ENCODE measurements at regions of chr12 and their contacts with region 1.

Region 1: GRCh38 chr12:101578417-101578816 is 16.4 kb upstream of the MYBPC1 start:
- DNase-seq: no peak
- H3K4me3 ChIP-seq: no peak overlapping the region
- H3K27ac ChIP-seq: no peak overlapping the region
- H3K4me1 ChIP-seq: no peaks in the 10 kb centered on the region
- H3K27me3 ChIP-seq: no peaks in the 10 kb centered on the region
- CTCF ChIP-seq: no peak
- POLR2A ChIP-seq: no peak

Region 2: DNA sequence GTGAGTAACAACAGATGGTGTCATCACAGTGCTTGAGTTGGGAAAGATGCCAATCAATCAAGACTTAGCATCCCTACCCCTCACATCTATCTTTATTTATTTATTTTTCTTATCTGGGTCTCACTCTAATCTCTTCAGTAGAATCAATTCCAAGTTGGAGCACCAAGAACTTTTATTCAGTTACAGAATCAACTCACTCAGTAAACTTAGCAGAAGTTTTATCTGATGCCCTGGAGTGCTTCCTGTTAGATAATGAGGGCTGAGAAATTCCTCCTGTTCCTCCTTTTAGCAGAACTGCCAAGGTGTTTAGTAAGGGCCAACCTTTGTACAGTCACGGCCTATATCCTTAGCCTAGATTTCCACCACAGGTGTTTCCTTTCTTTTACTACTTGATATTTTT is 357.1 kb before region 1 on chr12:
- intact Hi-C with region 1: loop called (anchors 5 kb)
- DNase-seq: no peak
- H3K4me3 ChIP-seq: no peak overlapping the region
- H3K27ac ChIP-seq: no peak overlapping the region
- H3K4me1 ChIP-seq: no peaks in the 10 kb centered on the region
- H3K27me3 ChIP-seq: no peaks in the 10 kb centered on the region
- CTCF ChIP-seq: no peak
- POLR2A ChIP-seq: no peak

Region 3: DNA sequence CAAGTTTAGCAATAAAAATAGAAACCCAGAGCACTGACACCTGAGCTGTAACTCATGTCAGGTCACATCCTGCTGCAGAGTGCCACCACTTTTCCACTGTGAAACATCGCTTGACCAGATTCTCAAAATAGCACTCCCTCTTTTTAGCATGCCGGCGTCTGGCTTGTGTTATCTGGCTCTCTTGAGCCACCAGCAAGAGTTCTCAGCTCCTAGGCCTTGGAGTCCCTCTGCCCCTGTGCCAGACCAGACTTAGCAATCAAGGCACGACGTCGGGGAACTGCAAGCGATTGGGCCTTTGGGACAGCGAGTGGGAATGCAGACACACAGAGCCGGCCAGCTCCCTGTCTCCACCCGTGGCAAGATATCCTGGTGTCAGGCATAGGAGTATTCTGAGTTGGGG is 50.7 kb before region 1 on chr12:
- intact Hi-C with region 1: no loop called
- DNase-seq: no peak
- H3K4me3 ChIP-seq: no peak overlapping the region
- H3K27ac ChIP-seq: no peak overlapping the region
- H3K4me1 ChIP-seq: no peaks in the 10 kb centered on the region
- H3K27me3 ChIP-seq: no peaks in the 10 kb centered on the region
- CTCF ChIP-seq: no peak
- POLR2A ChIP-seq: no peak

Measured in breast epithelium (tissue), 4 donors.